Calu3 (cell line): ENCODE measurements at regions of chr5 and their contacts with region 1.

Region 1: GRCh38 chr5:61256474-61256873 is 75.6 kb upstream of the ZSWIM6 start:
- DNase-seq: peak; percentile 42
- H3K4me3 Mint-ChIP-seq: no peak overlapping the region
- H3K27ac Mint-ChIP-seq: peak overlapping the region; percentile 55
- H3K4me1 Mint-ChIP-seq: peaks cover 53% of the 10 kb centered on the region
- H3K27me3 Mint-ChIP-seq: no peaks in the 10 kb centered on the region
- CTCF ChIP-seq: no peak

Region 2: DNA sequence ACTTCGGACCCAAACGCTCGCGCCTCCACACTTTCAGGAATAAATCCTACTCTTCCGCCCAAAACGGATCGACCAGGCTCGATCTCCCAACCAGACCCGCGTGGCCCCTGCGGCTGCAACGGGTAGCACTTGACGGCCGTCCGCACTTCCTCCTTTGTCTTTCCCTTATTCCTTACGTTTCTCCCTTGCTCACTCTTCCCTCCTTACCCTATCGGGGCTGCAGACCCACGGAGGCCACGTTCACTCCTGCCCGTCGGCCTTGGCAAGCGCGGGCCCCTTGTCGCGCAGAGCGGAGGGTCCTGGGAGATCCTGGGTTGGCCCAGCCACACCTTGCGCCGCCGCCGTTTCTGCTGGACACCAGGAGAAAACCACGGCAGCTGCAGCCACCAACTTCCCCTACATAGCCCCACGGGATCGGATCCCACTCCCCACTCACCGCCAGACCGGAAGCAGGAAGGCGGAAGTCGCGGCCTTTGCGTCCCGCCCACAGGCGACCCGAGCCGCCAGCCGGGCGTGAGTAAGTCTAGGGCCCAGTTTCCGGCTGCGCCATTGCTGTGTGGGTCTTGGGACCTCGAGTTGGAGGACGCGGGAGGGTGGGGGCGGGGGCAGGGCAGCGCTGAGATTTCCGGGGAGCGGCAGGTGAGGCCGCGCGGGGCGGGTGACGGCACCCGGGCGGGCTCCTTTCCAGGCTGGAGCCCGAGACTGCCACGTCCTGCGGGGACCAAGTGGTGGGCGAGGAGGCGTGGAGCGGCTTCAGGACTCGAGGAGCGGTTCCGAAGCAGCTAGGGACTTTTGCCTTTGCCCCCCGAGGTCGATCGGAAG is 94.3 kb before region 1 on chr5 and contains the start of gene SMIM15:
- CTCF ChIA-PET with region 1: interaction called, 3 read pairs
- intact Hi-C with region 1: loop called (anchors 2 kb)
- DNase-seq: peak; percentile 91
- H3K4me3 Mint-ChIP-seq: peak within 1 kb of the TSS; percentile 90
- H3K27ac Mint-ChIP-seq: peak within 1 kb of the TSS; percentile 95
- H3K4me1 Mint-ChIP-seq: peaks cover 22% of the 10 kb centered on the region
- H3K27me3 Mint-ChIP-seq: no peaks in the 10 kb centered on the region
- CTCF ChIP-seq: no peak
- total RNA-seq, gene SMIM15: 89.6 and 100 TPM in 2 replicates

Region 3: GRCh38 chr5:61277190-61277589 is 20.7 kb after region 1 on chr5:
- CTCF ChIA-PET with region 1: interaction called, 10 read pairs
- intact Hi-C with region 1: no loop called
- DNase-seq: no peak
- H3K4me3 Mint-ChIP-seq: peak overlapping the region; percentile 39
- H3K27ac Mint-ChIP-seq: peak overlapping the region; percentile 41
- H3K4me1 Mint-ChIP-seq: peaks cover 35% of the 10 kb centered on the region
- H3K27me3 Mint-ChIP-seq: no peaks in the 10 kb centered on the region
- CTCF ChIP-seq: no peak

Region 4: DNA sequence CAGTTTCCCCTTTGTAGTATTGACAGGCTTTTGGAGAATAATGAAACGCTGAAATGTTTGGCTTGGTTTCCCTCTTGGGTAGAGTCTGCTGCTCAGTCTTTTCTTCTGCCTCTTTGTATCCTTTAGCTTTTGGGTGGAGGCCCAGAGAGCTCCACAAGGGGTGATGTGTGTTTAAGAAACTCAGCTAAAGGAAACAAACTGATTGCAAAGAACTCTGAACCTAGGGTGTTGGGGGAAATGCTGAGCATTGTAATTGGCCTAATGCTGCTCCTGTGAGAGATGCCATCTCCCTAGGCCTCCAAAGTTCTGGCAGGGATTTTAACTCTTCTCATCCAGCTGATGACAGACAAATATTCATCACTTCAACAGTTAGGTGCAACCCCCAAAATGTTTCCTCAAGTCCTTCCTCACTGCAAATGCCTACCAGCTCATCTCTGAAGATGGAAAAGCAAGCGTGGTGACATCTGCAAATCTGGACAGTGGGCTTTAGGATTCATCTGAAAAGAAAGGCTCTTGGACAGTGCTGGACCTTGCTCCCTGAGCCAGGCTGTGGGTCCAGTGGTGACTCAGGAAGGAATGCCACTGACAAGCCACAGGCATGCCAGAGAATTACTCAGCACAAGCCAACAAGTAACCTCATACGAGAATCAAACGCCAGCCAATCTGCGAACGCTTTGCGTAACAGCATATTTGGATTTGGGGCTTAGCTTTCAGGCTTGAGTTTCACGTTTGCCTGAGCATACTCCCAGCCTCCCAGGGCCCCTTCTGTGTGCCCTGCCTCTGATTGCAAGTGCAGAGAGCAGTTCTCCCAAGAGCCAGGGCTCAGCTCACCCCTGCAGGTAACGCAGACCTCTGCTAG is 45.1 kb after region 1 on chr5:
- CTCF ChIA-PET with region 1: interaction called, 6 read pairs
- intact Hi-C with region 1: loop called (anchors 1 kb)
- DNase-seq: peak; percentile 86
- H3K4me3 Mint-ChIP-seq: peak overlapping the region; percentile 68
- H3K27ac Mint-ChIP-seq: peak overlapping the region; percentile 92
- H3K4me1 Mint-ChIP-seq: peaks cover 64% of the 10 kb centered on the region
- H3K27me3 Mint-ChIP-seq: no peaks in the 10 kb centered on the region
- CTCF ChIP-seq: no peak

Region 5: GRCh38 chr5:61362796-61363368 is 106.4 kb after region 1 on chr5:
- CTCF ChIA-PET with region 1: no interaction called
- intact Hi-C with region 1: no loop called
- DNase-seq: peak; percentile 6
- H3K4me3 Mint-ChIP-seq: no peak overlapping the region
- H3K27ac Mint-ChIP-seq: no peak overlapping the region
- H3K4me1 Mint-ChIP-seq: peaks cover 29% of the 10 kb centered on the region
- H3K27me3 Mint-ChIP-seq: no peaks in the 10 kb centered on the region
- CTCF ChIP-seq: no peak

Region 6: GRCh38 chr5:61401726-61402125 is 145.3 kb after region 1 on chr5:
- CTCF ChIA-PET with region 1: no interaction called
- intact Hi-C with region 1: loop called (anchors 5 kb)
- DNase-seq: no peak
- H3K4me3 Mint-ChIP-seq: no peak overlapping the region
- H3K27ac Mint-ChIP-seq: no peak overlapping the region
- H3K4me1 Mint-ChIP-seq: peaks cover 27% of the 10 kb centered on the region
- H3K27me3 Mint-ChIP-seq: no peaks in the 10 kb centered on the region
- CTCF ChIP-seq: no peak

Region 7: GRCh38 chr5:61450493-61451279 is 194.2 kb after region 1 on chr5:
- CTCF ChIA-PET with region 1: no interaction called
- intact Hi-C with region 1: no loop called
- DNase-seq: no peak
- H3K4me3 Mint-ChIP-seq: peak overlapping the region; percentile 59
- H3K27ac Mint-ChIP-seq: peak overlapping the region; percentile 98
- H3K4me1 Mint-ChIP-seq: peaks cover 12% of the 10 kb centered on the region
- H3K27me3 Mint-ChIP-seq: no peaks in the 10 kb centered on the region
- CTCF ChIP-seq: no peak